ENCODE measurements at regions of chr11 and their contacts with region 1.

Region 1: DNA sequence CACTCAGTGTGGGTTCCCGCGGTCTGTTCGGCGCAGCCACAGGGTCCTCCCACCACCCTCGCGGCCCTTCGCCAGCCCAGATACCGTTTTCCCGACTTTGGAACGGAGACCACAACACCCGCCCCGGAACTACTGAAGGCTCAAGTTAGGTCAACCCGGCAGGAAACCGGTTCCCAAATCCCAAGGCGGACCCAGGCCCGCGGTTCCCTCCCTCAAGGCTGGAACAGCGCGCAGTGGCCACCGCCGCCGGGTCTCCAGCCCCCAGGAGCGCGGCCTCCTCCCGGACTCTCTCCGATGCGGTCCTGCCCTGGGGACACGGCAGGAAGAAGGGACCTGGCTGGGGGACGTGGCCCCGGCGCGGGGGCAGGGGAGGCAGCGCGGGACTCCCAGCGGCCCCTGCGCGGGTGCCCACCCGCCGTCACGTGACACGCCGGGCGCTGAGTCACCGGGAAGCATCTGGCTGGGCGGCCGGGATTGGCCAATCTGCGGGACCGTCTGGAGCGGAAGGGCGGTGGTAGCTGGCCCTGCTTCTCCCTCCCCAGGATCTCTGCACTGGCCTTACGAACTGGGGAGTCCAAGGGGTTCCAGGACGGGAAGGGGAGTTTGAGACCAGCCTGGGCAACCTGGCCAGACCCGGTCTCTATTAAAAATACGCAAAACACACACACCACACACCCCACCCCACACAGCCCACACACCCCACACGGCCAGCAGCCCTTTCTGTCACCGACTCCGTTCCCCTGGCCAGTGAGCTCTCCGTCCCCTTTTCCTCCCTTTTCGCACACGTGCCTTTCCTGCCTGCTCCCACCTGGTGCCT is 21.5 kb upstream of the MALAT1 start:
- H3K4me3 ChIP-seq: peak overlapping the region; percentile 98
- H3K27ac ChIP-seq: peak overlapping the region; percentile 93
- H3K4me1 ChIP-seq: no peaks in the 10 kb centered on the region
- CTCF ChIP-seq: 0 out of 2 replicates have a peak, but pooled peaks have one; percentile 15

Region 2: DNA sequence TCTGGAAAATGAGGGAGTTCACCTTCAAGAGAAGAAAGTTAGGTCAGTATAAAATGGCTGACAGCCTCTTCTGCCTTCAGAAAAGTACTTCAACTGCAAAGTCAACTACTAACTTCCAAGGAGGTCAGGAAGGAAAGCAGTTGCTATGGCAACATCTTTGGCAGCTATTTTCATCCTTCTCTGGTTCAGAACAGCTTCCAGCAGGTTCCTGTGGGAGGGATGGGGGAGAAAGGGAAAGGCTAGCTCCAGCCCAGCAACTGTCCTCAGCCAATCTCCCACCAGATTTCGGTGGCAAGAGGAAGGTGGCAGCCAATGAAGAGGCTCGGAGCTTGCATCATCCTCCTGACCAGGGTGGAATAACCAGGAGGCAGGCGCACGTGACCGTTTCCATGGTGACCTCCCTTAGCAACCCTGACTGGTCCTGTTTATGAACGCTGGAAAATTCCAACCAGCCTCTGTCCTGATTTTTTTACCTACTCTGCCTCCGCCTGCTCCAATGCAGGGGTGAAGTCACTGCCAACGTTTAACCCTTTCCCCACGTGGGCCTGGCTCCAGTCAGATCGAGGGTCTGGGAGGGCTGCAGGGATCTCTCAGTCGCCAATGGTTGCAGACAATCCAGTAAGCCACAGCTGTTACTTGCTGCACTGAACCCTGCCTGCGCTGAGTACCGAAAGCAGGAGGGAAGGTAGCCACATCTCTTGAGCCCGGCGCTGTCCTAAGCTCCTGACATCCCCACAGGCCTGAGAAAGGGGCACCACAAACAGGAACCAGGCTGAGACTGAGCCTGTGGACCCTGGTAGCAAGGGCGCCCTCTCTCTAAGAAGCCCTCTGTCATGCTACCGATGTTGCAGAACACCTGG is 10.3 kb after region 1 on chr11:
- CTCF ChIA-PET with region 1: interaction called, 17 read pairs
- POLR2A ChIA-PET with region 1: interaction called, 63 read pairs
- H3K4me3 ChIP-seq: no peak overlapping the region
- H3K27ac ChIP-seq: peak overlapping the region; percentile 72
- H3K4me1 ChIP-seq: peaks cover 37% of the 10 kb centered on the region
- CTCF ChIP-seq: 0 out of 2 replicates have a peak, but pooled peaks have one; percentile 31

Measured in HEK293 (cell line).